PC-3 (cell line): ENCODE measurements at regions of chr18 and their contacts with region 1.

Region 1: DNA sequence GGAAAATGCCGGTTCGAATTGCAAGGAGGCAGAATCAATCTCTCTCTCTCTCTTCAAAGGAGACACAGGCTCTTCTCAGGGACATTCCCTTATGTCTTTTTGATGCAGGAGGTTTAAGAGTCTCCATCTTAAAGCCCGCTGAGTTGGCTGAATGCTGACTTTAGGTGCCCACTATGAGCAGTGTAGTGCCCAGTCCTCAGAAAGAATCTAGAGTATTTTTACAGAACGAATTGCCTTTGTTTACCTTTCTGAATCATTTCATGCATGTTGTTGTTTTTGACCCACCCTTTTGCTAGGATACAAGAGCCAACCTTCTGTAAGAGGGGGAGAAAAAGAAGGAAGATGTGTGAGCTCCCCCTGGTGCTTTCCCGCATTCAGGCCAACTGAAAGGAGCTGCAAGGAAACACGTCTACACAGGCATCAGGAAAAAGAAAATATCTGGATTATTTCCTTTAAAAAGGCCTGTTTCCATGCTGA is 193.5 kb upstream of the TCF4 start:
- DNase-seq: peak; percentile 69
- ATAC-seq: peak; percentile 71
- H3K4me3 ChIP-seq: no peak overlapping the region
- H3K27ac ChIP-seq: no peak overlapping the region
- H3K4me1 ChIP-seq: peaks cover 9% of the 10 kb centered on the region; the same call in 1 of the 2 replicates
- H3K27me3 ChIP-seq: no peaks in the 10 kb centered on the region
- CTCF ChIP-seq: peak; percentile 89

Region 2: GRCh38 chr18:55328301-55328700 is 453.2 kb before region 1 on chr18:
- CTCF ChIA-PET with region 1: interaction called, 5 read pairs
- POLR2A ChIA-PET with region 1: no interaction called
- intact Hi-C with region 1: loop called (anchors 5 kb)
- DNase-seq: no peak
- ATAC-seq: peak; percentile 40; the same call in 1 of the 2 replicates
- H3K4me3 ChIP-seq: no peak overlapping the region
- H3K27ac ChIP-seq: no peak overlapping the region
- H3K4me1 ChIP-seq: no peaks in the 10 kb centered on the region
- H3K27me3 ChIP-seq: no peaks in the 10 kb centered on the region
- CTCF ChIP-seq: no peak

Region 3: GRCh38 chr18:55343396-55344073 is 438.0 kb before region 1 on chr18:
- CTCF ChIA-PET with region 1: no interaction called
- POLR2A ChIA-PET with region 1: no interaction called
- intact Hi-C with region 1: loop called (anchors 5 kb)
- DNase-seq: peak; percentile 46
- ATAC-seq: peak; percentile 37; the same call in 1 of the 2 replicates
- H3K4me3 ChIP-seq: no peak overlapping the region
- H3K27ac ChIP-seq: no peak overlapping the region
- H3K4me1 ChIP-seq: no peaks in the 10 kb centered on the region
- H3K27me3 ChIP-seq: no peaks in the 10 kb centered on the region
- CTCF ChIP-seq: peak; percentile 69

Region 4: DNA sequence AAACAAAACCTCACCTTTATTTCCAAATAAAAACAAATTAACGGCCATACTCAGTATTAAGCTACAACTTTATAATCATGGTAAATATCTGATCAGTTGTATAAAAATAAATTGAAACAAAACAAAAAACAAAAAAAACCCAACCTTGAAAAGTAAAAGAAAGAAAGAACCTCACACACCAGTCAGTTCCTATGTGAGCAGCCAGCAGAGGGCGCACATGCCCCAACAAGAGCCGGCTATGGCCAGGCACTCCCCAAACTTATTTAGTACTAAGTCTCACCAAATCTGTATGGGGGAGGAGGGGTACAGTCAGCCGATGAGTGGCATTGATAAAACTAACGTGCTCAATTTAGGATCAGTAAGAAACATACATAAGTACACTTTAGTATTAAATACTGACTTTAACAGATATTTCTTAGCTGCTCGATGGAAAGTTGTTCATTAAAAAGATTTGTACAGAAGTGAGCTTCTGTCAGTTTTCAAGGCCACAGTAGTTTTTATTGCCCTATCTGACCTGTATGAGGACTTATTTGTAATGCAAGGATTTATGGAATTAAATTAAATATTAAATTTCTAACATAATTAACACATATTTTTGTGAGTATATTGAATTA is 366.2 kb before region 1 on chr18:
- CTCF ChIA-PET with region 1: interaction called, 3 read pairs
- POLR2A ChIA-PET with region 1: no interaction called
- intact Hi-C with region 1: loop called (anchors 1 kb)
- DNase-seq: peak; percentile 74
- ATAC-seq: peak; percentile 91
- H3K4me3 ChIP-seq: no peak overlapping the region
- H3K27ac ChIP-seq: no peak overlapping the region
- H3K4me1 ChIP-seq: peaks cover 10% of the 10 kb centered on the region; the same call in 1 of the 2 replicates
- H3K27me3 ChIP-seq: no peaks in the 10 kb centered on the region
- CTCF ChIP-seq: peak; percentile 96

Region 5: GRCh38 chr18:55577812-55578539 is 203.5 kb before region 1 on chr18:
- CTCF ChIA-PET with region 1: interaction called, 5 read pairs
- POLR2A ChIA-PET with region 1: no interaction called
- intact Hi-C with region 1: loop called (anchors 2 kb)
- DNase-seq: no peak
- ATAC-seq: no peak
- H3K4me3 ChIP-seq: no peak overlapping the region
- H3K27ac ChIP-seq: no peak overlapping the region
- H3K4me1 ChIP-seq: no peaks in the 10 kb centered on the region
- H3K27me3 ChIP-seq: no peaks in the 10 kb centered on the region
- CTCF ChIP-seq: peak; percentile 43

Region 6: DNA sequence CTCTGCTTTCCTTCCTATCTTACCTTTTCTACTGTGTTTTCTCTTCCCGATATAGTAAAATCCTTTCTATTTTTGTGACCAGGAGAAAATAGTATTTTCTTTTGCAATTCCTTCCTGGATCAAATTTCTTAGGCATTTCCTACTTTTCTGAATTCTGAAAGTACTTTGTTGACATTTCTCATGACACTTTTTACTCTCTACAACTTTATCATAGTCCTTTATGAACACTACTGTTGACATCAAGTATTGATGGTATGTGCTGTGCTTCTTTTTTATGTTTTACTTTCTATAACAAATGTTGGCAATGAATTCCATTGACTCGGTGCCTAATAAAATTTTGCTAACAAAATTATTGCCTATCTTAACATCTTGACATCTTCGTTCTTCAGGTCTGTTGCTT is 24.1 kb after region 1 on chr18:
- CTCF ChIA-PET with region 1: no interaction called
- POLR2A ChIA-PET with region 1: no interaction called
- intact Hi-C with region 1: no loop called
- DNase-seq: no peak
- ATAC-seq: no peak
- H3K4me3 ChIP-seq: no peak overlapping the region
- H3K27ac ChIP-seq: no peak overlapping the region
- H3K4me1 ChIP-seq: no peaks in the 10 kb centered on the region
- H3K27me3 ChIP-seq: no peaks in the 10 kb centered on the region
- CTCF ChIP-seq: no peak

Region 7: DNA sequence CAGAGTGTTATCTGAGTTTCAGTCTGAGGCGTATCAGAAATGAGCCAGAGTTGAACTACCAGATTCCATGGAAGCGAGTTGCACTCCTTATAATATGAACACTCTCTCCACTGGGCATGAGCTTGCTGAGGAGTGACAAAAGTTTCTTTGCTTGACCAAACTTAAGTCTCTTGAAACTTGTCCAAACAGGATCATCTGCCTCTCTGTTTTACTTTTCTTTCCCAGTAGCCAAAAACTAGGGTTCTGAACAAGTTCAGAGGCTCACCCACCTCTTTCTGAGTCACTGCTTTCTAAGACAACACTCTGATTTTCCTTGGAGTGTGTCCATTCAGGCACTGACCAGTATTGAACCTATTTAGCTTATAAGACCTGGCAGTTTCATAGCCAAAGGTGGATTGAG is 39.7 kb after region 1 on chr18:
- CTCF ChIA-PET with region 1: no interaction called
- POLR2A ChIA-PET with region 1: no interaction called
- intact Hi-C with region 1: no loop called
- DNase-seq: peak; percentile 68
- ATAC-seq: peak; percentile 84
- H3K4me3 ChIP-seq: no peak overlapping the region
- H3K27ac ChIP-seq: peak overlapping the region; percentile 48
- H3K4me1 ChIP-seq: peaks cover 20% of the 10 kb centered on the region
- H3K27me3 ChIP-seq: no peaks in the 10 kb centered on the region
- CTCF ChIP-seq: no peak

Region 8: DNA sequence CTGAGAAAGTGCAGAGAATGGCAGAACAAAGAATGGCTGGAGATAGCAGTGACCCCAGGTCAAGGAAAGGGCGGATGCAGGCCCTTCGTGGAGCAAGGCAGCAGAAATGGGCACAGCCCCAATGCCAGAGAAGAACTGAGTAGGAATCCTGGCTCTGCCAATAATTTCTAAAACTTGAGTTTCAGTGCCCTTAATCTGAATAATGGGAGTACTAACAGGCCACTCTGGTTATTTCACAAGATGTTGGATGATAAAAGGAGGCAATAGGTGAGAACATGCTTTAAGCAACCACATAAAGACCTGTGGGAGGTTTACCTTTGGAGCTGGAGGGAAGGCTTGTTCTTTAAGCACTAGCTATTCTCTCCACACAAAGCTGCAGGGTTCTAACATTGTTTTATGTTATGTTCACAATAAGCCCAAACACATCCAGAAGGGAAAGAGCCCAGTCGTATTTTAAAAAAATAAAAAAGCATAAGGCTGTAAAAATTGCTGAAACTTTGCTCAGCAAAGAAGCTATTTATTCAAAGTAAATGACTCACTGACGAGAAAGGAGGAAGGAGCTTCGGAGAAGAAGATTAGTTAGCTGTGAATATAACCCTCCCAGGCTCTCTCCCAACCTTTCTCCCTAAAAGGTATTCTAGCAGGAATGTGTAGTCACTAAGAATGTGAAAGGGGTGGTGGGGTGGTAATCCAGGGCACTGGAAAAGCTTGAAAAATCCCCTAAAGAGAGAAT is 386.7 kb after region 1 on chr18:
- CTCF ChIA-PET with region 1: no interaction called
- POLR2A ChIA-PET with region 1: no interaction called
- intact Hi-C with region 1: no loop called
- DNase-seq: peak; percentile 92
- ATAC-seq: peak; percentile 93
- H3K4me3 ChIP-seq: peak overlapping the region; percentile 39; the same call in 1 of the 2 replicates
- H3K27ac ChIP-seq: peak overlapping the region; percentile 93
- H3K4me1 ChIP-seq: peaks cover 40% of the 10 kb centered on the region
- H3K27me3 ChIP-seq: no peaks in the 10 kb centered on the region
- CTCF ChIP-seq: no peak